Naive thymus-derived CD4-positive, alpha-beta T cell (primary cell): ENCODE measurements at regions of chr1 and their contacts with region 1.

Region 1: GRCh38 chr1:245933431-245934045 is 573.5 kb downstream of the SMYD3 start:
- DNase-seq: no peak
- ATAC-seq: no peak
- H3K4me3 ChIP-seq: no peak overlapping the region
- H3K4me3 Mint-ChIP-seq: no peak overlapping the region
- H3K27ac ChIP-seq: no peak overlapping the region
- H3K27ac Mint-ChIP-seq: no peak overlapping the region
- H3K4me1 ChIP-seq: no peaks in the 10 kb centered on the region
- H3K4me1 Mint-ChIP-seq: peaks cover 0 to 2% (median 0%) of the 10 kb centered on the region in 7 donors
- H3K27me3 ChIP-seq: no peaks in the 10 kb centered on the region
- H3K27me3 Mint-ChIP-seq: no peaks in the 10 kb centered on the region

Region 2: GRCh38 chr1:245874942-245875580 is 58.5 kb before region 1 on chr1:
- CTCF ChIA-PET with region 1: no interaction called
- POLR2A ChIA-PET with region 1: no interaction called
- intact Hi-C with region 1: no loop called
- DNase-seq: no peak
- ATAC-seq: no peak
- H3K4me3 ChIP-seq: no peak overlapping the region
- H3K4me3 Mint-ChIP-seq: no peak overlapping the region
- H3K27ac ChIP-seq: no peak overlapping the region
- H3K27ac Mint-ChIP-seq: no peak overlapping the region
- H3K4me1 ChIP-seq: no peaks in the 10 kb centered on the region
- H3K4me1 Mint-ChIP-seq: peaks cover 0 to 3% (median 0%) of the 10 kb centered on the region in 7 donors
- H3K27me3 ChIP-seq: no peaks in the 10 kb centered on the region
- H3K27me3 Mint-ChIP-seq: no peaks in the 10 kb centered on the region

Region 3: GRCh38 chr1:245969283-245969682 is 35.7 kb after region 1 on chr1:
- CTCF ChIA-PET with region 1: no interaction called
- POLR2A ChIA-PET with region 1: no interaction called
- intact Hi-C with region 1: loop called in 1 of 2 experiments (anchors 5 kb)
- DNase-seq: no peak
- ATAC-seq: no peak
- H3K4me3 ChIP-seq: no peak overlapping the region
- H3K4me3 Mint-ChIP-seq: no peak overlapping the region
- H3K27ac ChIP-seq: no peak overlapping the region
- H3K27ac Mint-ChIP-seq: no peak overlapping the region
- H3K4me1 ChIP-seq: no peaks in the 10 kb centered on the region
- H3K4me1 Mint-ChIP-seq: peaks cover 0 to 3% (median 0%) of the 10 kb centered on the region in 7 donors
- H3K27me3 ChIP-seq: no peaks in the 10 kb centered on the region
- H3K27me3 Mint-ChIP-seq: no peaks in the 10 kb centered on the region